ENCODE measurements at regions of chr18 and their contacts with region 1.

Region 1: GRCh38 chr18:75052475-75052874 is 156.5 kb downstream of the PTGR3 start:
- DNase-seq: no peak
- ATAC-seq: peak in 7 of 8 donors; percentile 14 to 83 (median 58)
- H3K4me3 ChIP-seq: no peak overlapping the region
- H3K27ac ChIP-seq: peak overlapping the region in 8 of 10 donors; percentile 14 to 67 (median 60)
- H3K4me1 ChIP-seq: peaks cover 0 to 59% (median 16%) of the 10 kb centered on the region in 9 donors
- H3K27me3 ChIP-seq: no peaks in the 10 kb centered on the region
- CTCF ChIP-seq: no peak

Region 2: DNA sequence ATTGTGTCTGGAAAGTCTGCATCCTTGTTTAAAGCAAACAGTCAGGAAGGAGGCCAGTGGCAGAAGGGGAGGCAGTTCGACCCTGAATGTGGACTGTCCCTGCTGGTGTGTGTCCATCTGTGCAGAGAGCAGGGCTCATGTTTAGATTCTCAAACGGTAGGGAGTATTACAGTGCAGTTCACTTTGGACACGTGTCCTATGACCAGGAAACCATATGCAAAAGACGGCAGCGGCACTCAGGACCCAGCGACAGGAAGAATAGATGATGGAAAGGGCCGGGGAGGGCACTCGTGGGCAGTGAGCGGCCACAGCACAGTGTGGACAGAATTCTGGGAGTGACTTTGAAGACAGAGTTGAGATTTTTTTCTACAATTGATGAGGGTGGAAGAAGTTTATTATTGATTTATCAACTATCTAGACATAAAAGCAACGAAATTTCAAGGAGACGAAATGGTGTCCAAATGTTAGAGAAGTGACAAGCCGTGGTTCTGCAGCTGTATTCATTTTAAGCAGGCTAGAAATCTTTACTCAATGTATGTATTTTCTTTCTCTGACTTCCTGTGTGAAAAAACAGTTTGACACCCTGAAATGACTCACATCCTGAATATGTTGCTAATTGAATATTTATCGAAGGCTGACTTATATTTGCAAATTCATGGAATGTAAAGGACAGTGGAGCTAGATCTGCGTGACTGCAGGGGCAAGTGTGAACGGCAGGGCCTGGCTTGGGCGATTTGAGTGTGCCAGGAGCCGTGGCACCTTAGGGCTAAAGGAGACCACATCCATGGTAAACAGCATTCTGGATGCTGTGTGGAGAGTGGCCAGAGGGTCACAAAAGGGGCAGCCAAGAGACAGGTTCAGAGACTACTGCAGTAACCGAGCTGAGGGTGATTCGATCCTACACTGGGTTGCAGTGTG is 57.7 kb before region 1 on chr18:
- intact Hi-C with region 1: loop called in 1 of 10 experiments (anchors 10 kb)
- DNase-seq: no peak
- ATAC-seq: peak in 3 of 8 donors; percentile 35 to 44 (median 42)
- H3K4me3 ChIP-seq: peak overlapping the region in 1 of 10 donors; percentile 22
- H3K27ac ChIP-seq: peak overlapping the region in 1 of 10 donors; percentile 86
- H3K4me1 ChIP-seq: peaks cover 0 to 53% (median 0%) of the 10 kb centered on the region in 9 donors
- H3K27me3 ChIP-seq: no peaks in the 10 kb centered on the region
- CTCF ChIP-seq: no peak

Region 3: GRCh38 chr18:75314115-75314514 is 261.6 kb after region 1 on chr18:
- intact Hi-C with region 1: no loop called
- DNase-seq: no peak
- ATAC-seq: no peak
- H3K4me3 ChIP-seq: no peak overlapping the region
- H3K27ac ChIP-seq: no peak overlapping the region
- H3K4me1 ChIP-seq: no peaks in the 10 kb centered on the region
- H3K27me3 ChIP-seq: no peaks in the 10 kb centered on the region
- CTCF ChIP-seq: peak in 1 of 9 donors; percentile 8

Measured in heart right ventricle (tissue), 16 donors.